Calu3 (cell line): ENCODE measurements at regions of chr2 and their contacts with region 1.

Region 1: GRCh38 chr2:21175895-21176646 is 52.3 kb downstream of the TDRD15 start:
- DNase-seq: no peak
- H3K4me3 Mint-ChIP-seq: no peak overlapping the region
- H3K27ac Mint-ChIP-seq: no peak overlapping the region
- H3K4me1 Mint-ChIP-seq: no peaks in the 10 kb centered on the region
- H3K27me3 Mint-ChIP-seq: peaks cover 39% of the 10 kb centered on the region
- CTCF ChIP-seq: no peak

Region 2: DNA sequence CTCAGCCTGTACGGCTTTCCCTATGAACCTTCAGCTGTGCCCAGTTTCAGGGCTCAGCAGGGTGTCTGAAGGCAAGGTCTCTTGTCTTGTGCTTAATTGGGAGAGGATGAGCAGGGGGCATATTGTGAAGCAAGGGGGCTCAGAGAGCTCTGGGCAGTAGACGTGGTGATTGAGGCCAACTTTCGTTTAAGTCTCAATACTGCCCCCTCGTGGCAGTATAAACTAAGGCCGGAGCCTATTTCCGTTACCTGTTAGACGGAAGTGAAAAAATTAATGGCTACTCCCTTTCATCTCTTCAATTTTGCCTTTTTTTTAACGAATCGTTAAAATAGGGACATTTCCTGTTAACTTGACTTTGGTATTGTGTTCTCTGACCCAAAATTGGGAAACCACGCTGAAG is 141.1 kb after region 1 on chr2:
- CTCF ChIA-PET with region 1: interaction called, 6 read pairs
- intact Hi-C with region 1: loop called (anchors 1 kb)
- DNase-seq: peak; percentile 61
- H3K4me3 Mint-ChIP-seq: no peak overlapping the region
- H3K27ac Mint-ChIP-seq: no peak overlapping the region
- H3K4me1 Mint-ChIP-seq: no peaks in the 10 kb centered on the region
- H3K27me3 Mint-ChIP-seq: peaks cover 18% of the 10 kb centered on the region
- CTCF ChIP-seq: peak; percentile 46